ENCODE measurements at regions of chr10 and their contacts with region 1.

Region 1: DNA sequence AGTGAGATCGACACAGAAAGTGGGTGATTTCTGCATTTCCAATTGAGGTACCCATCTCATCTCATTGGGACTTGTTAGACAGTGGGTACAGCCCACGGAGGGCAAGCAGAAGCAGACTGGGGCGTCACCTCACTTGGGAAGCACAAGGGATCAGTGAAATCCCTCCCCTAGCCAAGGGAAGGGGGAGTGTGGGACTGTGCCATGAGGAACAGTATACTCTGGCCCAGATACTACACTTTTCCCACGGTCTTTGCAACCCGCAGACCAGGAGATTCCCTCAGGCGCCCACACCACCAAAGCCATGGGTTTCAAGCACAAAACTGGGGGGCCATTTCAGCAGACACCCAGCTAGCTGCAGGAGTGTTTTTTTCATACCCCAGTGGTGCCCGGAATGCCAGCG is 99.8 kb downstream of the ODAD2 start:
- DNase-seq: no peak
- H3K4me3 ChIP-seq: no peak overlapping the region
- H3K27ac ChIP-seq: no peak overlapping the region
- H3K4me1 ChIP-seq: no peaks in the 10 kb centered on the region
- H3K27me3 ChIP-seq: no peaks in the 10 kb centered on the region
- CTCF ChIP-seq: no peak

Region 2: DNA sequence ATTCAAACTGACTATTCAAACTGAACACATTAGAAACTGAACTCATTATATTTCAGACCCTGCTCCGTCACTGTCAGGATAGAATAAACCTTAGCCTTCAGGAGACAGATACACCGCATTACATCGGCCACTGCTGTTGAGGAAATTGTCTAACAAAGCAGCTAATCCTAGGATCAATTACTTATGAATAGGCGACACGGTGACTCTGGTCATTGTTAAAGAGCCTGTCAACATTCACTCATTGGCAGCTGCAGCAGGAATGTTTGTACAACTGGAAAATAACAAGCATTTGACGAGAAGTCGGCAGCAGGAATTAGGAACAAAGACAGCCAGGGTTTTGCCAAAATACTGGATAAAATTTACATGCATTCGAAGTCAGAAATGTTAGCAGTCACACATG is 41.4 kb before region 1 on chr10:
- CTCF ChIA-PET with region 1: no interaction called
- POLR2A ChIA-PET with region 1: no interaction called
- intact Hi-C with region 1: loop called (anchors 2 kb)
- DNase-seq: no peak
- H3K4me3 ChIP-seq: no peak overlapping the region
- H3K27ac ChIP-seq: no peak overlapping the region
- H3K4me1 ChIP-seq: no peaks in the 10 kb centered on the region
- H3K27me3 ChIP-seq: peaks cover 6% of the 10 kb centered on the region
- CTCF ChIP-seq: no peak

Region 3: DNA sequence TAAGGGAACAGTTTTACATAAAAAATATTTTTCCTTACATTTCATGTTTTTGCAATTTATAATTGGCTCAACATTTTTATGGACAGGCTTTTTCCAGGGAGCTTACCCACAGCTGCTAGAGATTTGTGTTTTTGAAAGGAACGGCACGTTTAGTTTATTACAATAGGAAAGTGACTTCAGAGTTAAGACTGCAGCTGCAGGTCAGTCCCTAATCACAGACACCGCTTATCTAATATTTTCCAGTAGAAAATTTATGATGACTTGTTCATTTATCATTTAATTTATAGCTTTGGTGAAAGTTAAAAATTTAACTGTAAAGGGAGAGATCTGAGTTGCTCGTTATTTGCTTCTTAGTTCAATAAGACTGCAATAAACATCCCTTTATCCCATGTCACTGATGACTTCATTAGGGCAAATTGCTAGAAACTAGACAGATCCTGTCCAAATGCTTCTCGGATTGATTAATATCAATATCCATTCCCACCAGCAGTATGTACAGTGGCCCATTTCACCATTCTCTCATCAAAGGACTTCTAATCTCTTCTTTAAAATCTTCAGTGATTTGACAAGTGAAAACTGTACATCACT is 196.8 kb after region 1 on chr10:
- CTCF ChIA-PET with region 1: no interaction called
- POLR2A ChIA-PET with region 1: no interaction called
- intact Hi-C with region 1: no loop called
- DNase-seq: no peak
- H3K4me3 ChIP-seq: no peak overlapping the region
- H3K27ac ChIP-seq: no peak overlapping the region
- H3K4me1 ChIP-seq: no peaks in the 10 kb centered on the region
- H3K27me3 ChIP-seq: no peaks in the 10 kb centered on the region
- CTCF ChIP-seq: no peak

Region 4: GRCh38 chr10:28120043-28120749 is 221.1 kb after region 1 on chr10:
- CTCF ChIA-PET with region 1: no interaction called
- POLR2A ChIA-PET with region 1: no interaction called
- intact Hi-C with region 1: no loop called
- DNase-seq: peak; percentile 37
- H3K4me3 ChIP-seq: no peak overlapping the region
- H3K27ac ChIP-seq: peak overlapping the region; percentile 51
- H3K4me1 ChIP-seq: peaks cover 17% of the 10 kb centered on the region
- H3K27me3 ChIP-seq: no peaks in the 10 kb centered on the region
- CTCF ChIP-seq: no peak

Region 5: GRCh38 chr10:28137907-28138880 is 239.1 kb after region 1 on chr10:
- CTCF ChIA-PET with region 1: no interaction called
- POLR2A ChIA-PET with region 1: no interaction called
- intact Hi-C with region 1: no loop called
- DNase-seq: peak; percentile 86
- H3K4me3 ChIP-seq: no peak overlapping the region
- H3K27ac ChIP-seq: no peak overlapping the region
- H3K4me1 ChIP-seq: no peaks in the 10 kb centered on the region
- H3K27me3 ChIP-seq: no peaks in the 10 kb centered on the region
- CTCF ChIP-seq: no peak

Measured in A673 (cell line).